ENCODE measurements at regions of chr20 and their contacts with region 1.

Region 1: DNA sequence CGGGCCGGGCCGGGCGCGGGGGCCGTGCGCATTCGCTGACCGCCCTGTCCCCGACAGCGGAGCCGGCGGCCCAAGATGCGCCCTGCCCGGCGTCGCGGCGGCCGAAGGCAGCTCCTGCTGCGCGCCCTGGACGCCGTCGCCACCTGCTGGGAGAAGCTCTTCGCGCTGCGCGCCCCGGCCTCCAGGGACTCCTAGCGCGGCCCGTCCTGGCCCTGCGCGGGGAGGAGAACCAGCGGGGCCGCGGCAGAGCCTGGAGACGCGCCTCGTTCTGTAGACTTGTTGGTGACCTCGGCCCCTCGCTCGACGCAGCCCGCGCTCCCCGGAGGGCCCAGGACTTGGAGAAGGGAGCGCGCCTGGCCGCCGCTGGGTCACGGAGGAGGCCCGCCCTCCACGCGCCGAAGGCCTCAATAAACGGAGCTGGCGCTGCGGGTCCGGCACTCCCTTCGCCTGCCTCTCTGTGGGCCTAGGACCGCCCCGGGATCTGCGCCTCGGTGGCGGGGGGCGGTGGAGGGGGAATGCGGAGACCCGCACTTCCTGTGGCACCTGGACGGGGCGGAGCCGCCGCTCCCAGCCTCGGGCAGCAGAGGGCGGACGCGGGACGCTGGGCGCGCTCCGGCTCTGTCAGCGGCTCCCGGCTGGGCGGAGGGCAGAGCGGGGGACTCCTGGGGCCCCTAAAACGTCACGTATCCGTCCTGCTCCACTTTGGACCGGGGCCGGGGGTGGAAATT is 2.7 kb downstream of the C20orf204 start:
- DNase-seq: no peak
- ATAC-seq: peak; percentile 79
- H3K4me3 ChIP-seq: peak overlapping the region; percentile 43 to 58
- H3K27ac ChIP-seq: peak overlapping the region; percentile 64
- H3K4me1 ChIP-seq: peaks cover 35% of the 10 kb centered on the region
- H3K27me3 ChIP-seq: no peaks in the 10 kb centered on the region
- CTCF ChIP-seq: peak; percentile 95

Region 2: DNA sequence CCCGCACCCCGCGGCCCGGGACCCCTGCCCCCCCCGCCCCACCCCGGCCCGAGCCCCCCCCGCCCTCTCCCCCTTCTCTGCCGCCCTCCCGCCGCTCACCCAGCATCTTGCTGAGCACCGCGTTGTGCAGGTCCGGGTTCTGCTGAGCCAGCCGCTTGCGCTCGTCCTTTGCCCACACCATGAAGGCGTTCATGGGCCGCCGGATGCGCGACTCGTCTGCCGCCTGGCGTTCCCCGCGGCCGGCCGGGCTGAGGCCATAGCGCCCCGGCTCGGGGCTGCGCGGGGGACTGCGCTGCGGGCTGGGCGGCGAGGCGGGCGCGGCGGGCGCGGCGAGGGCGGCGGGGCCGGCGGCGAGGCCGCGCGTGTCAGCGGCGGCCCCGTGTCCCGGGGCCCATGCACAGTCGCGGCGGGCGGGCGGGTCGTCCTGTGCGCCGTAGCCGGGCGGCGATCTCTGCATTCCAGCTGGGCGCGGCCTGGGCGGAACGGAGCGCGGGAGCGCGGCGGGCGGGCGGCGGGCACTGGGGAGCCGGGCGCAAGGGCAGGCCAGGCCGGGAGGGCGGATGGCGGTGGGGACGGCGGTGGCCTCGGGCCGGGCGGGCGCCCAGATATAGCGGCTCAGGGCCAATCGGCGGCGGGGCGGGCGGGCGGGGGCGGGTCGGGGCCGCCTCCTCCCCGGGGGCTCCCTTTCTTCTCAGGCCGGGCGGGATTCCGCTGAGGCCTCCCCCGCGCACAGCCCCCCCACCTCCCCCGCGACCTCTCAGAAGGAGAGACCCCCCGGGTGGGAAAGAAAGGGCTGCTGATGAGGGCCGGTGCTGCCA is 10.5 kb after region 1 on chr20 and contains the start of gene SOX18:
- CTCF ChIA-PET with region 1: interaction called, 11 read pairs
- POLR2A ChIA-PET with region 1: no interaction called
- in situ Hi-C with region 1: no loop called
- intact Hi-C with region 1: no loop called
- DNase-seq: no peak
- ATAC-seq: peak; percentile 54
- H3K4me3 ChIP-seq: peak within 1 kb of the TSS; percentile 33
- H3K27ac ChIP-seq: peak within 1 kb of the TSS; percentile 84
- H3K4me1 ChIP-seq: peaks cover 58% of the 10 kb centered on the region
- H3K27me3 ChIP-seq: no peaks in the 10 kb centered on the region
- CTCF ChIP-seq: no peak; the same call in 1 of the 2 replicates
- total RNA-seq, gene SOX18: 18.7 TPM

Region 3: DNA sequence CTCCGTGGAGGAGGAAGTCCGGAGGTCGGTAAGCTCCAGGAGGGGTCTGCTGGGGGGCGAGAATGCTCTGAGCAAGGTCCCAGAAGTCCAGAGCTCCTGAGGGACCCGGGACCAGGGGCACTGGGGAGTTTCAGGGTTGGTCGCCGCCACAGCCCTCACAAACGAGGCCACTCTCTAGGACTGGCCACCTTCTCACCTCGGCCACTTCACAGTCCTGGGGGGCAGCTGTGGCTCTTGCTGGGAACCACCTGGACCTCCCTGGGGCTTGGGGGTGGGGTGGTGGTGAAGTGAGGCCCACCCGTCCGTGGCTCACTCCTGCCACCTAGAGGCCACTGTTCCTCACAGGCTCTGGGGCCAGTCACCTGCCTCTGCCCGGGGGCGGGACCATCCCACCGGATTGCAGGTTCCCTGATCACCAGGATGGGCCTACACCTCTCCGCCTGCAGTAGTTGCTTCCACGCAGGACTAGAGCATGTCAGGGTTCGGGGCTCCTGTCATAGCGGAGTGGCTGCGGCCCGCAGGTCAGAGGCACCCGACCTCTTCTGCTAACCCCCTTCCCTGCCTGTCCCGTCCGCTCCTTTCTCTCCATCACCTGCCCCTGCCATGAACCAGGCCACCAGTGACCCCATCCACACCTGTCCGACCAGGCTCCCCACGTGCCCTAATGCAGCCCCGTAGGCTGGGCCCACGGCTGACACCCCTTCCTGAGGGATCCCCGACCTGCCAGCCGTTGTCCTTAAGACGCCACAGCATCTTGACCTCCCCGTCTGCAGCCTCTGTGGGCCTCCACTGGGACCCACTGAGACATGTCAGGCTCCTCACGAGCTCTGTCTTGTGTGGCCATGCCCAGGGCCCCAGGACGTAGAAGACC is 19.1 kb after region 1 on chr20:
- CTCF ChIA-PET with region 1: interaction called, 14 read pairs
- POLR2A ChIA-PET with region 1: no interaction called
- in situ Hi-C with region 1: no loop called
- intact Hi-C with region 1: no loop called
- DNase-seq: no peak
- ATAC-seq: peak; percentile 79
- H3K4me3 ChIP-seq: no peak overlapping the region
- H3K27ac ChIP-seq: peak overlapping the region; percentile 68; the same call in 1 of the 2 replicates
- H3K4me1 ChIP-seq: peaks cover 49% of the 10 kb centered on the region
- H3K27me3 ChIP-seq: no peaks in the 10 kb centered on the region
- CTCF ChIP-seq: peak; percentile 96